ENCODE measurements at regions of chr12 and their contacts with region 1.

Region 1: GRCh38 chr12:10771132-10771733 is 31.2 kb downstream of the TAS2R7 start:
- DNase-seq: no peak
- ATAC-seq: no peak
- H3K4me3 ChIP-seq: no peak overlapping the region
- H3K27ac ChIP-seq: no peak overlapping the region
- H3K4me1 ChIP-seq: no peaks in the 10 kb centered on the region
- H3K27me3 ChIP-seq: peaks cover 3 to 5% of the 10 kb centered on the region in 2 donors
- CTCF ChIP-seq: peak in 6 of 7 experiments; percentile 46 to 82 (median 79)
- POLR2A ChIP-seq: no peak

Region 2: GRCh38 chr12:10634427-10634826 is 136.8 kb before region 1 on chr12:
- intact Hi-C with region 1: no loop called
- DNase-seq: no peak
- ATAC-seq: no peak
- H3K4me3 ChIP-seq: no peak overlapping the region
- H3K27ac ChIP-seq: no peak overlapping the region
- H3K4me1 ChIP-seq: no peaks in the 10 kb centered on the region
- H3K27me3 ChIP-seq: no peaks in the 10 kb centered on the region
- CTCF ChIP-seq: no peak
- POLR2A ChIP-seq: no peak

Region 3: DNA sequence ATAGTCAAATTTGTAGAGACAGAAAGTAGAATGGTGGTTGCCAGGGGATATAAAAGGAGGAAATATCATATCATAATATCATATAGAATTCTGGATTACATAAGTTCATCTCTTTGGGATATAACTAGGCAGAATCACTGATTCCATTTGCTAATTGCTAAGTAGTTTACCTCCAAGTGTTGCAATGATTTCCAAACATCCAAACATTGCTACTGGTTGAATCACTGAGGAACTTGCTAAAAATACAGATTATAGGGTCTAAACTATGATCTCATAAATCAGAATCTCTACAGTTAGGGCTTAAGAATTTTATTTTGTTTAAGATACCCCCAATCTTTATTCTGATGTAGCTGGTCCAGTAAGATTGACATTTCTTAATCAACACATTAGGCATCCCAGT is 431.6 kb after region 1 on chr12:
- intact Hi-C with region 1: loop called (anchors 5 kb)
- DNase-seq: no peak
- ATAC-seq: no peak
- H3K4me3 ChIP-seq: no peak overlapping the region
- H3K27ac ChIP-seq: no peak overlapping the region
- H3K4me1 ChIP-seq: no peaks in the 10 kb centered on the region
- H3K27me3 ChIP-seq: no peaks in the 10 kb centered on the region
- CTCF ChIP-seq: no peak
- POLR2A ChIP-seq: no peak

Region 4: GRCh38 chr12:11486623-11487444 is 715.6 kb after region 1 on chr12:
- intact Hi-C with region 1: loop called (anchors 10 kb)
- DNase-seq: peak; percentile 80 to 84 (median 82)
- ATAC-seq: peak; percentile 88
- H3K4me3 ChIP-seq: no peak overlapping the region
- H3K27ac ChIP-seq: no peak overlapping the region
- H3K4me1 ChIP-seq: no peaks in the 10 kb centered on the region
- H3K27me3 ChIP-seq: no peaks in the 10 kb centered on the region
- CTCF ChIP-seq: peak; percentile 77 to 99 (median 94)
- POLR2A ChIP-seq: no peak